GM10248 (cell line): ENCODE measurements at regions of chr19 and their contacts with region 1.

Region 1: GRCh38 chr19:48489608-48490216 is 20.5 kb downstream of the CYTH2 start:
- DNase-seq: peak; percentile 85
- CTCF ChIP-seq: peak; percentile 96

Region 2: DNA sequence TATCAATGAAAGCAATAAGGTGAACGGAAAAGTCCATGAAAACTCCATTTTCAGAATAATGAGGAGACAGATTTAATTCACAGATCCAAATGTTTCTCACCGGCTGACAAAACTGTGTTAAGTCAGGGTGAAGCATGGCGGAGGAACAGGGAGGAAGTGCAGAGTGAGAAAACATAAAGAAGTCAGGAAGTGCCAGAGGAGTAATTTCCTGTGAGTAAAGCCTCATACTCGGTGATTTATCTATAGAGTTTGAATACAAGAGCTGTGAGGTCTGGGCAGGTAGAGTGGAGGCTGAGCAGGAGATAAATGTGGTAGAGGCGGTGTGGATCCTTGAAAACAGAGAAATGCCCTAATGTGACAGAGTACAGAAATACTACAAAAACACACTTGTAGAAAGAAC is 245.4 kb before region 1 on chr19:
- CTCF ChIA-PET with region 1: no interaction called
- POLR2A ChIA-PET with region 1: no interaction called
- DNase-seq: no peak
- CTCF ChIP-seq: no peak

Region 3: GRCh38 chr19:48469289-48469881 is 20.3 kb before region 1 on chr19 and contains the start of gene CYTH2:
- CTCF ChIA-PET with region 1: interaction called, 20 read pairs
- POLR2A ChIA-PET with region 1: interaction called, 3 read pairs
- DNase-seq: peak; percentile 74
- CTCF ChIP-seq: no peak

Region 4: GRCh38 chr19:48501496-48502350 is 12.0 kb after region 1 on chr19:
- CTCF ChIA-PET with region 1: interaction called, 29 read pairs
- POLR2A ChIA-PET with region 1: no interaction called
- DNase-seq: peak; percentile 82
- CTCF ChIP-seq: no peak

Region 5: DNA sequence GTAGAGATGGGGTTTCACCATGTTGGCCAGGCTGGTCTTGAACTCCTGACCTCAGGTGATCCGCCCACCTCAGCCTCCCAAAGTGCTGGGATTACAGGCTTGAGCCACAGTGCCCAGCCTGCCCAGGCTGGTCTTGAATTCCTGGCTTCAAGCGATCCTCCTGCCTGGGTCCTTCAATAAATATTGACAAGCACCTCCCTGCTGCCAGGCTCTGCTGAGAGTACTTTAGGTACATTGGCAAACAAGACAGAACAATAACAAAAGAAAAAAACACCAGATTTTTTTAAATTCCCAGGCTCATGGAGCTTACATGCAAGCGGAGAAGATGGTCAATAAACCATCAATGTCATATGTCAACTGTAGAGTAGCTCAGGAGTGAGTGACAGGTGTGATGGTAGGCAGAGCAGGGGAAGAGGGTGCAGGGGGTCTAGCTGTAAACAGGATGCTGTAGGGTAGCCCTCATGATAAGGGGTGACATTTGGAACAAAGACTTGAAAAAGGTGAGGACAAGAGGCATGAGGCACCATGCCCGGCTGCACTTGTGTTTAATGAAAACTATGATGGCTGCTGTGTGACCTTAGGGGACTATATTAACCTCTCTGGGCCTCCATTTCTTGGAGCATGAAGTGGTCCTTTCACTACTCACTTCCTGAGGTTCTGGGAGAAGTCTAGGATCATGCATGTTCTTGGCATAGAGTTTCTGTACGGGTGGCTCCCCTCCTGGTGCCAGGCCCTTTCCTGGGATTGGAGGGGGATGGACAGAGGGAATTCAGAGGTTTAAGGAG is 81.9 kb after region 1 on chr19:
- CTCF ChIA-PET with region 1: interaction called, 10 read pairs
- POLR2A ChIA-PET with region 1: no interaction called
- DNase-seq: no peak
- CTCF ChIP-seq: no peak

Region 6: DNA sequence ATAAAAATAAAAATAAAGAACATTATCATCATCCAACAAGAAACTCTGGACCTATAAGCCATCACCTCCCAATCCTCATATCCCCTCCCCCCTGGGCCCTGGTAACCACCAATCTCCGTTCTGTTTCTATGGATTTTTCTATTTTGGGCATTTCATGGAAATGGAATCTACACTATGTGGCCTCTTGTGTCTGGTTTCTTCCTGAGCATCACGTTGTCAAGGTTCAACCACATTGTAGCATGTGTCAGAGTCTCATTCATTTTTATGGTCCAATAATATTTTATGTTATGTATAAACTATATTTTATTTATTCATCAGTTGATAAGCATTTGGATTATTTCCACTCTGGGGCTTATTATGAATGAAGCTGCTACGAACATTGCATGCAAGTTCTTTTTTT is 89.2 kb after region 1 on chr19:
- CTCF ChIA-PET with region 1: interaction called, 68 read pairs
- POLR2A ChIA-PET with region 1: no interaction called
- DNase-seq: no peak
- CTCF ChIP-seq: no peak

Region 7: DNA sequence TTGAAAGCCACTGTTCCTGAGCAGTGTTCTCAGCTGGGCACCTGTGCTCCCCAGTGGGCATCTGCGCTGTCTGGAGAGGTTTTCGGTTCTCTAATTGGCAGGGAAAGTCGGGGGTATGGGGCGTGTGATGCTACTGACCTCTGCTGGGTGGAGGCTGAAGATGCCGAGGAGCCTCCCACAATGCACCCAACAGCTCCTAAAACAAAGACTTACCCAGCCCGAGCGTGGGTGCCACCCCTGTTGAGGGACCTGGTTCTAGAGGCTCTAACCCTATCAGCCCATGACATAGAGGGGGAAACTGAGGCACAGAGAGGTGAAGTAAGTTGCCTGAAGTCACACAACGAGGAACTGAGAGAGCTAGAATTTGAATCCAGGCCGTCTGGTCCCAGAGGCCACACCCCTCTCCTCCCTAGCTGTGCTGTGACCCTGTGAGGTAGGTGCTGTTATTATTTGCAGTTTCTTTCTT is 119.1 kb after region 1 on chr19:
- CTCF ChIA-PET with region 1: interaction called, 23 read pairs
- POLR2A ChIA-PET with region 1: no interaction called
- DNase-seq: peak; percentile 80
- CTCF ChIP-seq: peak; percentile 65